ENCODE measurements at regions of chr15 and their contacts with region 1.

Region 1: DNA sequence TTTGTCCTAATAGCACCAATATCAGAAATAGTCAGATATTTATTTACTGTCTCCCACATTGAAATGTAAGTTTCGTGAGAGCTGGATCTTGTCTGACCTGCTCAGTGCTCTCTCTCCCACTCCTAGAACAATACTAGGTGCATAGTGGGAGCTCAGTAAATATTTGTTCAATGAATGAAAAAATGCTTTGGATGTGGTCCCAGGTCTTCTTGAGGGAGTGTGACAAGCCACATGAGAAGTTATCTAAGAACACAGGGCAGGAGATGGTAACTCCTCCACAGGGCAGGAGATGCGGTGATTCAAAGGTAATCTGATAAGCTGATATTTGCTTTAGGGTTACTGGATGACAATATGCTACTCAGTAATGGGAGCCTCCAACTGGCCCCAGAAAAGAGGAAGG is 25.7 kb upstream of the PLA2G4E start:
- DNase-seq: peak; percentile 85 to 88
- H3K4me3 ChIP-seq: no peak overlapping the region
- H3K4me3 Mint-ChIP-seq: peak overlapping the region; percentile 57
- H3K27ac Mint-ChIP-seq: peak overlapping the region; percentile 94
- H3K4me1 ChIP-seq: peaks cover 54% of the 10 kb centered on the region
- H3K4me1 Mint-ChIP-seq: peaks cover 55% of the 10 kb centered on the region
- H3K27me3 ChIP-seq: no peaks in the 10 kb centered on the region
- H3K27me3 Mint-ChIP-seq: no peaks in the 10 kb centered on the region
- CTCF ChIP-seq: no peak

Region 2: DNA sequence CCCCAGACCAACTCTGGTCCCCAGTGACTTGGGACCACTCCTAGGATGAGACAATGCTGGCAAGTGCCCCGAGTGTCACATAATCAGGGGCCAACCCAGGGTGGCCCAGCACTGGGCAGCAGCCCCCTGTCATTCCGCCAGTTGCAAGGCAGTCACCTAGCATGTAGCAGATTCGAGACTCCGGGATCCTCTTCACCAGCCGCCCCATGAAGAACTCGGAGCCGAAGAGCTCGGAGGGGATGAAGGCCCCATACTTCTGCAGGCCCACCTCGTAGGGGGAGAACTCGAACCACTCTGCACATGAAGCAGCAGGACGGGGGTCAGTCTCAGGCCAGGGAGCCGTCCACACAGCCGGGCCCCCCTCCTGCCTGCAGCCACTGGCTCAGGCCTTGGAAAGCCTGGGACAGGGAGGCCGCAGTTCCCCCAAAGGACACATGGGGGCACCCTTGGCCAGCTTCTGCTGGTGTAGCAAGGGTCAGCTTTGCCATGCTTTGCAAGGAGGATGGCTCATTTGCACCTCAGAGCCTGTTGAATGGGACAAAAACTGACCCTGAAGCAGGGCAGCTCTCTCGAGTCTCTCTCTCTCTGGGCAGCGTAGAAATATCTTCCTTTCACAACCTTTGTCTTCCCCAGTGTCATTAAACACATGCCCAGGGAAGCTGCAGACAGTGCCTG is 57.2 kb before region 1 on chr15:
- CTCF ChIA-PET with region 1: interaction called, 11 read pairs
- POLR2A ChIA-PET with region 1: no interaction called
- intact Hi-C with region 1: no loop called
- DNase-seq: peak; percentile 86 to 94
- H3K4me3 ChIP-seq: no peak overlapping the region
- H3K4me3 Mint-ChIP-seq: no peak overlapping the region
- H3K27ac Mint-ChIP-seq: peak overlapping the region; percentile 29
- H3K4me1 ChIP-seq: peaks cover 18% of the 10 kb centered on the region
- H3K4me1 Mint-ChIP-seq: peaks cover 14% of the 10 kb centered on the region
- H3K27me3 ChIP-seq: no peaks in the 10 kb centered on the region
- H3K27me3 Mint-ChIP-seq: no peaks in the 10 kb centered on the region
- CTCF ChIP-seq: peak; percentile 96 to 99

Region 3: DNA sequence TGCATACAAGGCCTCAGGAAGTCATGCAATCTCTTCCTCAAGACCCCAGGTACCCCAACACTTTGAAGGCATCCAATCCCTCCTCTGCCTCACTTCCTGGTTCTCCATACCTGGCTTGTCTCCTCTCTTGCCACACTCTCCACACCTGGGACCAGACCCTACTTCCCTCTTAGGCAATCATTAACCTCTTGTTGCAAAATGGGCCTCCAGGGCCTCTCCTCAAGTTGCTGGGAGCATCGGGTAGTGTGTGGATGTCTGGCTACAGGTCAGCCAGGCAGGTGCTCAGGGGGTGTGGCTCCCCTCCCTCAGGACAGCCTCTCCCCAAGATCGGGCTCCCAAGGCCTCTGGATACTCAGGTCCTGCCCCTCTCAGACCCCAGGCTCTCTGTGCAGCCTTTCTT is 34.3 kb before region 1 on chr15:
- CTCF ChIA-PET with region 1: interaction called, 8 read pairs
- POLR2A ChIA-PET with region 1: interaction called, 3 read pairs
- intact Hi-C with region 1: loop called (anchors 1 kb)
- DNase-seq: peak; percentile 92 to 96
- H3K4me3 ChIP-seq: no peak overlapping the region; the same call in 1 of the 2 replicates
- H3K4me3 Mint-ChIP-seq: peak overlapping the region; percentile 68
- H3K27ac Mint-ChIP-seq: peak overlapping the region; percentile 91
- H3K4me1 ChIP-seq: peaks cover 57% of the 10 kb centered on the region
- H3K4me1 Mint-ChIP-seq: peaks cover 49% of the 10 kb centered on the region
- H3K27me3 ChIP-seq: no peaks in the 10 kb centered on the region
- H3K27me3 Mint-ChIP-seq: no peaks in the 10 kb centered on the region
- CTCF ChIP-seq: no peak

Region 4: DNA sequence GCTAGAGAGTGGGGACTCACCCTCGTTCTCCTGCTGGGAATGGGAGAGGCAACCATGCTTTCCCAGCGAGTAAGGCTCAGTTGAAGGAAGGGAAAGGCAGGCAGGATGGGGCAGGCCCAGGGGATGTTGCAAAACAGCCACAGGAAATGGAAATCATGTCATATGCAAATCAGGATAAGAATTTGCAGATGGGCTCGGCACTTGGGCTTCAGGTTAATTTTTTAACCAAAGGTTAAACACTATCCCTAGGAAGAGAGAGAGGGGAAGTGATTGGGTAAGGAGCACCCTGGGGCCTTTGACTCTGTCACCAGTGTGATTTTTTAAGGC is 11.2 kb before region 1 on chr15:
- CTCF ChIA-PET with region 1: no interaction called
- POLR2A ChIA-PET with region 1: no interaction called
- intact Hi-C with region 1: loop called (anchors 1 kb)
- DNase-seq: peak; percentile 60 to 80
- H3K4me3 ChIP-seq: no peak overlapping the region
- H3K4me3 Mint-ChIP-seq: no peak overlapping the region
- H3K27ac Mint-ChIP-seq: peak overlapping the region; percentile 57
- H3K4me1 ChIP-seq: peaks cover 29% of the 10 kb centered on the region
- H3K4me1 Mint-ChIP-seq: peaks cover 6% of the 10 kb centered on the region
- H3K27me3 ChIP-seq: no peaks in the 10 kb centered on the region
- H3K27me3 Mint-ChIP-seq: no peaks in the 10 kb centered on the region
- CTCF ChIP-seq: no peak

Region 5: DNA sequence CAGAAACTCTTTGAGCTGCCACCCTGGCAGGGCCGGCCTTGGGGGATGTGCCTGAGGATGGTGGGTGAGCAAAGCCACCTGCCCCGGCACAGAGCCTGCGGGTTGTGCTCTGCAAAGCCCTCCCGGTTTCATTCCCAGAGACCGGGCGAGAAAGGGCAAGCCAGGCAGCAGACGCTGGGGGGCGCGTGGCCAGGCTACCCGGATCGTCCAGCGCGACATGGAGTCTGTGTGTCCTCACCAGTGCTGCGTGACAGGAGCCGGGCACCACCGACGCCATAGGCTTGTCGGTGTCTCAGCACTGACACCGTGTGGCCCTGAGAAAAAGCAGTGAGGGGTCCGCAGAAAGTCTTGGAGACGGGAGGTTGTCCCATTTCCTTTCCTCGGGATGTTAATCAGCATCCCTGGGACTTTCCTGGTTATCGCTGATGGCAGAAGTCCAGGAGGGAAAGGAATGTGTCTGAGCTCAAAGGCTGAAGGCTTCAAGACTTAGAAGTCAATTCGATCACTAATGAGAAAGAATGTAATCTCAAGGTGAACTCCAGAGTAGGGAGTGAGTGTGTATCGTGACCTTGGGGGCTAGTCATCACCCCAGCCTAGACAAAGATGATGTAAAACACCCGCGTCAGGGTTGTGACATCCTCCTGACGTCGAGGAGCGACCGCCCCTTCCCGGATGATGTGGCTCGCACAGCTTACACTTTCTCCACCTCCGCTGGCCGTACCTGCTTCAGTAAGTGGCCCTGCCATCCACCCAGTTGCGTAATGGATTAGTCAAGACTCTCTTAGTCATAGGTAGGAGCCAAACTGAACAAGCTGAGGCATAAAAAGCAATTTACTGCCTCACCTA is 10.6 kb after region 1 on chr15:
- CTCF ChIA-PET with region 1: interaction called, 16 read pairs
- POLR2A ChIA-PET with region 1: interaction called, 5 read pairs
- intact Hi-C with region 1: loop called (anchors 1 kb)
- DNase-seq: peak; percentile 92 to 96
- H3K4me3 ChIP-seq: peak overlapping the region; percentile 33
- H3K4me3 Mint-ChIP-seq: peak overlapping the region; percentile 76
- H3K27ac Mint-ChIP-seq: peak overlapping the region; percentile 93
- H3K4me1 ChIP-seq: peaks cover 19% of the 10 kb centered on the region
- H3K4me1 Mint-ChIP-seq: peaks cover 7% of the 10 kb centered on the region
- H3K27me3 ChIP-seq: no peaks in the 10 kb centered on the region
- H3K27me3 Mint-ChIP-seq: no peaks in the 10 kb centered on the region
- CTCF ChIP-seq: peak; percentile 73 to 87

Region 6: GRCh38 chr15:42084460-42085235 is 38.1 kb after region 1 on chr15:
- CTCF ChIA-PET with region 1: interaction called, 6 read pairs
- POLR2A ChIA-PET with region 1: no interaction called
- intact Hi-C with region 1: loop called (anchors 1 kb)
- DNase-seq: peak; percentile 69 to 81
- H3K4me3 ChIP-seq: no peak overlapping the region
- H3K4me3 Mint-ChIP-seq: no peak overlapping the region
- H3K27ac Mint-ChIP-seq: no peak overlapping the region
- H3K4me1 ChIP-seq: no peaks in the 10 kb centered on the region
- H3K4me1 Mint-ChIP-seq: peaks cover 8% of the 10 kb centered on the region
- H3K27me3 ChIP-seq: no peaks in the 10 kb centered on the region
- H3K27me3 Mint-ChIP-seq: no peaks in the 10 kb centered on the region
- CTCF ChIP-seq: peak; percentile 90 to 92

Region 7: GRCh38 chr15:42371125-42371524 is 324.5 kb after region 1 on chr15:
- CTCF ChIA-PET with region 1: no interaction called
- POLR2A ChIA-PET with region 1: no interaction called
- intact Hi-C with region 1: no loop called
- DNase-seq: peak in 1 of 2 experiments; percentile 19
- H3K4me3 ChIP-seq: no peak overlapping the region
- H3K4me3 Mint-ChIP-seq: no peak overlapping the region
- H3K27ac Mint-ChIP-seq: no peak overlapping the region
- H3K4me1 ChIP-seq: no peaks in the 10 kb centered on the region
- H3K4me1 Mint-ChIP-seq: peaks cover 5% of the 10 kb centered on the region
- H3K27me3 ChIP-seq: no peaks in the 10 kb centered on the region
- H3K27me3 Mint-ChIP-seq: peaks cover 2% of the 10 kb centered on the region
- CTCF ChIP-seq: no peak